A673 (cell line): ENCODE measurements at regions of chr2 and their contacts with region 1.

Region 1: DNA sequence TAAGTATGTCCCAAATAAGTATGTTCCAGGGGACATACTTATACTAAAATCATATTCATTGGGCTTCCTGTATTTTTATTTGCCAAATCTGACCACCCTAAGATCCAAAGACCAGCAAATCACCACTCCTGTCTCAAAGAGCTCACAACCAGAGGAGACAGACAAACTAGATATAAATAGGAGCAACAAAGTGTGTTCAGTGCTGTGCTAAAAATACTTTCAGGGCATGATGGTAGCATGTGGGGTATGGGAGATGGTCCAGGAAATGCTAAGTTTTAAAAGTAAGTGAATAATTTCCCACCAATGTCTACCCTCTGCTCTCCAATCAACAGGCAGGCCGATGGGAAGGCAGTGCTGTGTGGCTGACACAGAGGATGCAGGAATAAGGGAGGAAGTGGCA is 87.1 kb downstream of the C1QL2 start:
- DNase-seq: no peak
- H3K4me3 ChIP-seq: no peak overlapping the region
- H3K27ac ChIP-seq: no peak overlapping the region
- H3K4me1 ChIP-seq: no peaks in the 10 kb centered on the region
- H3K27me3 ChIP-seq: peaks cover 30% of the 10 kb centered on the region
- CTCF ChIP-seq: no peak

Region 2: GRCh38 chr2:119049968-119050704 is 21.3 kb before region 1 on chr2:
- CTCF ChIA-PET with region 1: no interaction called
- POLR2A ChIA-PET with region 1: no interaction called
- intact Hi-C with region 1: loop called (anchors 1 kb)
- DNase-seq: peak; percentile 48
- H3K4me3 ChIP-seq: no peak overlapping the region
- H3K27ac ChIP-seq: no peak overlapping the region
- H3K4me1 ChIP-seq: no peaks in the 10 kb centered on the region
- H3K27me3 ChIP-seq: peaks cover 9% of the 10 kb centered on the region
- CTCF ChIP-seq: peak; percentile 35; the same call in 1 of the 2 replicates

Region 3: GRCh38 chr2:119739580-119740255 is 668.2 kb after region 1 on chr2:
- CTCF ChIA-PET with region 1: no interaction called
- POLR2A ChIA-PET with region 1: no interaction called
- intact Hi-C with region 1: no loop called
- DNase-seq: no peak
- H3K4me3 ChIP-seq: no peak overlapping the region
- H3K27ac ChIP-seq: no peak overlapping the region
- H3K4me1 ChIP-seq: peaks cover 23% of the 10 kb centered on the region
- H3K27me3 ChIP-seq: no peaks in the 10 kb centered on the region
- CTCF ChIP-seq: no peak